Activated T-helper 2 cell treated with anti-CD3 and anti-CD28 coated beads, Interferon-gamma antibody, Interleukin-2, Interleukin-4, amounts not matched to agents 10 μg/mL and 5 μg/mL and 100 μg/mL, durations not matched to agents 14 hours and 24 hours and 36 hours (primary cell): ENCODE measurements at regions of chr1 and their contacts with region 1.

Region 1: GRCh38 chr1:87151500-87152421 is 176.9 kb upstream of the LMO4 start:
- DNase-seq: peak; percentile 18
- H3K4me3 Mint-ChIP-seq: peak overlapping the region; percentile 81
- H3K27ac Mint-ChIP-seq: peak overlapping the region; percentile 85
- H3K4me1 Mint-ChIP-seq: peaks cover 15% of the 10 kb centered on the region
- H3K27me3 Mint-ChIP-seq: peaks cover 45% of the 10 kb centered on the region

Region 2: DNA sequence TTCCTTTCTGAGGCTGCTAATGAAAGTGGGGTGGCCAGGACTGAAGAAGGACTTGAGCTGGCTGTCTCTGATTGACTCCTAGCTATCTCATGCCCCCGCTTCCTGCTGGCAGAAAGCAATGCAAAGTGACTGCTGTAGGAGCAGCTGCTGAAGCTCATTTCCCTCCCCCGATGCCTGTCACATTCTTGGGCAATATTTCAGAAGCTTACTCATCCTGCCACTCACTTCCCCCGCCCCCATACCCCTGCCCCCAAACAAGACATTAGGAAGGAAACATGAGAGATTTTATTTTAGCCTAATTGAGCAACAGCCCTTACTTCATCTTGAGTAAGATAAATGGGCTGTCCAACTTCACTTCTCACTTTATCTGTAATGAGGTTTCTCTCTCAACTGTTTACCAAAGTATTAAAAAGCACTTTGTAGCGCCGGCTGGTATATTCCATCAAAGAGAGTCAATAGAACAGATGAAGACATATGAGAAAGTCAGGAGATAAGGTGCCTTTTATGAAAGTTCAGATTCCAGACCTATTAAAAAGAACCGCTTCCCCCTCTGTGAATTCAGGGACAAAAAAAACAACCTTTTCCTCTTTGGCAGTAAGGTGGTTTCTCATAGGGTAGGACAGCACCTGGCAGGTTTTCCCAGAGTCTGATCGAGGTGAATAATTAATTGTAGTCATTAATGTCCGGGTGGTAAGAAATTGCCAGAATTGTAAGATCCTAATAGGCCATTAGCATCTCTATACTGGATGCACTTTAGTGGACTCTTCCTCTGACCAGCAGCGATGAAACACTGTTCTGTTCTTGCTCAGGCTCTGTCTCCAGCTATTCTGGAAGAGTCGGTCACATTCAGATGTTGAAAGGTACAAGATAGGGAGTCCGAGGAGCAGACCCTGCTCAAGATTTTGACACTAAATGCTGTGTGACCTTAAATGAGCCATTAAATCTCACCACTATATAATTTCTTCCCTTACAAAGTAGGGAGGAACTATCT is 377.2 kb before region 1 on chr1:
- intact Hi-C with region 1: loop called (anchors 1 kb)
- DNase-seq: no peak
- H3K4me3 Mint-ChIP-seq: peak overlapping the region; percentile 9
- H3K27ac Mint-ChIP-seq: peak overlapping the region; percentile 77
- H3K4me1 Mint-ChIP-seq: peaks cover 22% of the 10 kb centered on the region
- H3K27me3 Mint-ChIP-seq: no peaks in the 10 kb centered on the region

Region 3: DNA sequence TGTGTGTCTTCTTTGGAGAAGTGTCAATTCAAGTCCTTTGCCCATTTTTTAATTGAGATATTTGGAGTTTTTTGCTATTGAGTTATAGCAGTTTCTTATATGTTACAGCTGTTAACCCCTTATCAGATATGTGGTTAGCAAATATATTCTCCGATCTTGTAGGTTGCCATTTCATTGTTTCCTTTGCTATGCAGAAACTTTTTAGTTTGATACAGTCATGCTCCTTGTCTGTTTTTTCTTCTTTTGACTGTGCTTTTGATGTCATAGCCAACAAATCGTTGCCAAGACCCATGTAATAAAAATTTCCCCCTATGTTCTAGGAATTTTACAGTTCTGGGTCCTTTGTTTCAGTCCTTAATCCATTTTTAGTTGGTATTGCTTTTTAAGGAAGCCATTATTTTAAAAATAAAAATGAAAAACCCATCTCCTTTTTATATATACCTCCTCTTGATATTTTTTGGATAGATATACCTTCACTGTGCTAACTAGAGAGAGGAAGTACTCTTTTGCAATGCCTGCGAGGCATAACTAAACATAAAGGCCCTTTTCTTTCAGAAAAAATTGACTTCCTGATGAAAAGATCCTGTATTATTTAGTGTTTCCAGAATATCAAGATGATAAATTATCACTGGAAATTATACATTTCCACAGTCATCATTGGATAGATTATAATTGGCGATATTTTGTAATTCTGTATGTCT is 109.5 kb before region 1 on chr1:
- intact Hi-C with region 1: no loop called
- DNase-seq: no peak
- H3K4me3 Mint-ChIP-seq: no peak overlapping the region
- H3K27ac Mint-ChIP-seq: peak overlapping the region; percentile 81
- H3K4me1 Mint-ChIP-seq: peaks cover 51% of the 10 kb centered on the region
- H3K27me3 Mint-ChIP-seq: no peaks in the 10 kb centered on the region

Region 4: DNA sequence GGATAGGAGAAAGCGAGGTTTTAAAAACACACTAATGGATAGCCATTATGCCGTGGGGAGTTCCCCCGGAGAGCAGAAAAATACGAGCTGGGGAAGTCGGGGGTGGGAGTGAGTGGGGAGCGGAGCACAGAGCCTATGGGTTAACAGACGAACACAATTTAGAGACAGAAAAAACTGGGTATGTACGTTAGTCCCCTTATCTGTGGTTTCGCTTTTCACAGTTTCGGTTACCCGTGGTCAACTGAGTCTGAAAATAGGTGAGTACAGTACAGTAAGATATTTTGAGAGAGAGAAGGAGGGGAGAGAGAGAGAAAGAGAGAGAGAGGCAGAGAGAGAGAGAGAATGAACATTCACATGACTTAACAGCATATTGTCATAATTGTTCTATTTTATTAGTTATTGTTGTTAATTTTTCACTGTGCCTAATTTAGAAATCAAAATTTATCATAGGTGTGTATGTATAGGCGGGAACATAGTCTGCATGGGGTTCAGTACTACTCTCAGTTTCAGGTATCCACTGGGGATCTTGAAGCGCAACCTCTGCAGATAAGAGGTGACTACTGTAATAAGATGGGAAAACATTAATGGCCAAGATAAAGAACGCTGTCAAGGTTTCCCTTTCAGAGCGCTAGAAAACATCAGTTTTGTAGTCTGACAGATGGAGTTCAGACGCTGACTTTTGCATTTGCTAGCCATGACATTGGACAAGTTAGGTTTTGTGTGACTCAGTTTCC is 51.3 kb after region 1 on chr1:
- intact Hi-C with region 1: loop called (anchors 2 kb)
- DNase-seq: no peak
- H3K4me3 Mint-ChIP-seq: peak overlapping the region; percentile 18
- H3K27ac Mint-ChIP-seq: no peak overlapping the region
- H3K4me1 Mint-ChIP-seq: peaks cover 24% of the 10 kb centered on the region
- H3K27me3 Mint-ChIP-seq: peaks cover 37% of the 10 kb centered on the region

Region 5: DNA sequence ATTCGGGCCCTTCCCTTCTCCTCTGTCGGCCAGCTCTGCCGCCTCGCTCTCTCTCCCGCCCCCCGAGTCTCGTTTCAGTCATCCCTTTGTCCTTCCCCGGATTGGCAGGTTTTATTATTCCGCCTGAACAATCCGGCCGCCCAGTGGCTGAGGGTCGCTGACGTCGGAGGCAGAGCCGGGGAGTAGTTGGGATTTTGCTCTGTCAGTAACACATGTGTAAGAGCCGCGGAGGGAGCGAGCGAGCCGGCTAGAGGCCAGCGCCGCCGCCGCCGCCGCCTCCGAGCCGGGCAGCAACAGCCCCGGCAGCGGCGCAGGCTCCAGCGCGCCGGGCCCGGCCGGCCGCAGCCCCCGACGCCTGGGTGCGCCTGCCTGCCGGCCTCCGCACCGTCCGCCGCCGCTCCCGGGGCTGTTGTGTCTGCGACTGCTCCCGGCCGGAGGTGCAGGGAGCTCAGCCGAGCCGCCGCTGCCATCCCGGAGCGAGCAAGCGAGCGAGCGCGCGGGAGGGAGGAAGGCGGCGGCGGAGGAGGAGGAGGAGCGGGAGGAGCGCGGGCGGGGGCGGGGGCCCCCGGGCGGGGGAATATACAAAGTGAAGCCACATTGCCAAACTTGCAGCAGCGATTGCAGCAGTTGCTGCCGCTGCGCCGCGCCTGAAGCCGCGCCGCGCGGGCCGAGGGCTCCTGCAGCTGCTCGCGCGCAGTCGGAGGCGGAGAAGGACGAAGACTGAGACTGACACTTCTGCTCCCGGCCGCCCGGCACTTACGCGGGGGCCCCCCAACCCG is 176.7 kb after region 1 on chr1 and contains the start of gene LMO4:
- intact Hi-C with region 1: loop called (anchors 5 kb)
- DNase-seq: peak; percentile 76
- H3K4me3 Mint-ChIP-seq: peak within 1 kb of the TSS; percentile 92
- H3K27ac Mint-ChIP-seq: peak within 1 kb of the TSS; percentile 89
- H3K4me1 Mint-ChIP-seq: peaks cover 32% of the 10 kb centered on the region
- H3K27me3 Mint-ChIP-seq: peaks cover 26% of the 10 kb centered on the region
- total RNA-seq, gene LMO4: 20.9 and 21.7 TPM in 2 replicates